ENCODE measurements at regions of chr6 and their contacts with region 1.

Region 1: DNA sequence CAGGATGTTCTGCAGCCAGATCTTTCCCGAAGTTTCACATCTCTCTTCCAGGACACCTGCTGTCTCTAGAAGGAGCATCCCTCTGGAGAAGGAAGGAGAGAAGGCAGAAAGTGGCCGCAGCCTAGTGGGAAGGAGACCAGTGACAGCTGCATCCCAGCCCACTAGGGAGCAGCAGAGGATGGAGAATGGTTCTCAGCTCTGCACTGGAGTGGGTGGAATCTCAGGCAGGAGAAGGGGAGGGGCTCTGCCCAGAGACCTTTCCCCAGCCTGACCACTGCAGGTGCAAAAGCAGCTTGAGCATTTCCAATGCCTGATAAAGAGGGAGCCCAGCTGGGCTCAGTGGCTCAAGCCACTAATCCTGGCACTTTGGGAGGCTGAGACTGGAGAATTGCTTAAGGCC is 32.3 kb downstream of the NCR2 start:
- DNase-seq: peak; percentile 78
- ATAC-seq: peak; percentile 94
- H3K4me3 ChIP-seq: no peak overlapping the region
- H3K27ac ChIP-seq: no peak overlapping the region
- H3K4me1 ChIP-seq: peaks cover 8% of the 10 kb centered on the region
- H3K27me3 ChIP-seq: peaks cover 0 to 15% of the 10 kb centered on the region in 2 experiments; a peak in 4 of 5 replicates
- CTCF ChIP-seq: peak; percentile 98
- EP300 ChIP-seq: no peak
- POLR2A ChIP-seq: no peak
- RAD21 ChIP-seq: peak; percentile 94

Region 2: GRCh38 chr6:41306187-41306854 is 61.4 kb before region 1 on chr6:
- CTCF ChIA-PET with region 1: interaction called, 15 read pairs
- POLR2A ChIA-PET with region 1: no interaction called
- in situ Hi-C with region 1: no loop called
- intact Hi-C with region 1: no loop called
- DNase-seq: peak; percentile 70
- ATAC-seq: peak; percentile 69
- H3K4me3 ChIP-seq: no peak overlapping the region
- H3K27ac ChIP-seq: no peak overlapping the region
- H3K4me1 ChIP-seq: peaks cover 6% of the 10 kb centered on the region
- H3K27me3 ChIP-seq: peaks cover 2 to 23% of the 10 kb centered on the region in 2 experiments; a peak in 3 of 5 replicates
- CTCF ChIP-seq: peak; percentile 69
- EP300 ChIP-seq: no peak
- POLR2A ChIP-seq: no peak
- RAD21 ChIP-seq: no peak

Region 3: DNA sequence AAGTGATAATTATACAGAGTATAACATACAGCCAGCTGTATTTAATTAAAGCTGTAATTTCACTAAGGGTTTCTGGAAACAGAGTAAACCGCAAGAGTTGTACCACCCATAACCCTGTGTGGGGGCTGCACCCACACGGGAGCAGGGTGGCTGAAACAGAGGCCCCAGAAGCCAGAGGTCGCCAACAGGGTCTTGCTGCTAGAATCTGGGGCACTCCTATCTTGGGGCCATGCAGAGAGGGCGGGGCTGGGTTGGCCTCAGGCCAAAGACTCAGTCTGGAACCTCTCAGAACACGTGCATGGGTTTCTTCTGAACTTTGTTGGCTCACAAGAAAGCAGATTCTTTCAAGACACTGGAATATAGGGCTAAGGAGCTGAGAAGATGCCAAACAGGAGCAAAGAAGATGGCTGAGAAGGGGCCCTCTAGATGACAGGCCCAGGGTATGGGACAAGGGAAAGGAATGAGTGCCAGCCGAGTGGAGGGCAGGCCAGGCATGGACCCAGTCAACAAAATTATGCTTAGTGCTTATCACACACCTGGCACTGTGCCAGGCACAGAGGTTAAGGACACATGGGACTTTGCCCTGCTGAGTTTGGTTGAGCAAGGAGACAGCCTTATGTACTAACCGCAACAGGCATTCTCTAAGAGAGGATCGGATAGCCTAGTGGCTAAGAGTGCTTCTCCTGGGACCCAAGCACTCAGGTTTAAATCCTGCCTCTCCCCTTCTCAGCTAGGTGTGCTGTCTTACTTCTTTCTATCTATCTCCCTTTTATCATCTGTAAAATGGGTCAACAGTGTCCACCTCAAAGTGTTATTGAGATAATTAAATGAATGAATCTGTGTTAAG is 81.9 kb after region 1 on chr6:
- CTCF ChIA-PET with region 1: interaction called, 5 read pairs
- POLR2A ChIA-PET with region 1: no interaction called
- in situ Hi-C with region 1: loop called (anchors 5 kb)
- intact Hi-C with region 1: no loop called
- DNase-seq: peak; percentile 86
- ATAC-seq: peak; percentile 58
- H3K4me3 ChIP-seq: 0 out of 6 replicates have a peak overlapping the region, but pooled peaks of 1 of the 3 experiments have one; percentile 3
- H3K27ac ChIP-seq: no peak overlapping the region
- H3K4me1 ChIP-seq: peaks cover 54% of the 10 kb centered on the region
- H3K27me3 ChIP-seq: peaks cover 12 to 58% of the 10 kb centered on the region in 2 experiments; a peak in 3 of 5 replicates
- CTCF ChIP-seq: no peak
- EP300 ChIP-seq: peak in 1 of 2 experiments; percentile 76; a peak in 2 of 4 replicates
- POLR2A ChIP-seq: no peak
- RAD21 ChIP-seq: no peak

Region 4: DNA sequence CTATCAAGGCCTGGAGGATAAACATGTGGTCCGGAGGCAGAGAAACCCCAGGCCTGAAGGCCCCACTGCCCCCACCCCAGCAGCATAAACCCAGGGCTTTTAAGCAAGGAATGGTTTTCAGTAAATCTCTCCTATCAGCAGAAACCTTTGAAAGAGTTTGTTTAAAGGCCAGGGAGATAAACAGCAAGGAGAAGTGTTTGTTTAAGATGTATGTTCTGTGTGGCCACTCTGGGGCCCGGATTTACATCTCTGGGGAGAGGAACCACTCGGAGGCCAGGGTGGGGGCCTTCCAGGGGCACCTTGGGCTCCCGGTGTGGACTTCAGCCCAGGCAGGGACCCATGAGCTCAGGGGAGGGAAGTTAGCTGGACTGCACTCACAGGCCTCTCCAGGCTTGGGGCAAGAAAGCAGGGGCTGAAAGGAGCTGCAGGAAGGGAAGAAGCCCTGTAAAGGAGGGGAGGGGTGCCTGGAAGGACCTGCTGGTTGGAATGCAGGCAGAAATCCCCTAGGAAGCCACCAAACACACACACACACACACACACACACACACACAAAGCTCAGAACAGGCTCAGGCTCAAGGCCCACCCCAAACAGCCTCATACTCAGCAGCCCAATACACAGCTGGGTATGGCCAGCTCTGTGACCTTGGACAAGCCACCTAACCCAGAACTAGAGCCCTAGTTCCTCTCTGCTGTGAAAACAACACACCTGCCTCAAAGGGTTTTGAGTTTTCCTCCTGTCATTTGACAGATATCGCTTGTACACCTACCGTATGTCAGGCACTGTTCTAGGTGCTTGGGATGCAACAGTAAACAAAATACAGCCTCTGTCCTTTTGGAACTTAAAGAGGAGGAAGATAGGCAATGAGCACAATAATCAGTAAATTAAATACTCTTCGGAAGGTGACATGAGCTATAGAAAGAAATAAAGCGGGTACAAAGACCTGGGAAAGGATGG is 152.3 kb after region 1 on chr6:
- CTCF ChIA-PET with region 1: no interaction called
- POLR2A ChIA-PET with region 1: no interaction called
- in situ Hi-C with region 1: no loop called
- intact Hi-C with region 1: no loop called
- DNase-seq: peak; percentile 97
- ATAC-seq: peak; percentile 93
- H3K4me3 ChIP-seq: peak overlapping the region in 2 of 3 experiments; percentile 8 to 50; a peak in 2 of 6 replicates
- H3K27ac ChIP-seq: peak overlapping the region; percentile 94
- H3K4me1 ChIP-seq: peaks cover 88% of the 10 kb centered on the region
- H3K27me3 ChIP-seq: no peaks in the 10 kb centered on the region
- CTCF ChIP-seq: peak; percentile 1; the same call in 1 of the 2 replicates
- EP300 ChIP-seq: peak in 1 of 2 experiments; percentile 98; a peak in 2 of 4 replicates
- POLR2A ChIP-seq: peak; percentile 74 to 77; a peak in 3 of 4 replicates
- RAD21 ChIP-seq: peak; percentile 45

Region 5: GRCh38 chr6:41545703-41546474 is 178.2 kb after region 1 on chr6 and contains the start of gene FOXP4:
- CTCF ChIA-PET with region 1: no interaction called
- POLR2A ChIA-PET with region 1: no interaction called
- in situ Hi-C with region 1: no loop called
- intact Hi-C with region 1: loop called (anchors 5 kb)
- DNase-seq: peak; percentile 91
- ATAC-seq: peak; percentile 75
- H3K4me3 ChIP-seq: peak within 1 kb of the TSS; percentile 67 to 99 (median 99)
- H3K27ac ChIP-seq: peak within 1 kb of the TSS; percentile 66
- H3K4me1 ChIP-seq: peaks cover 48% of the 10 kb centered on the region
- H3K27me3 ChIP-seq: no peaks in the 10 kb centered on the region
- CTCF ChIP-seq: 0 out of 2 replicates have a peak, but pooled peaks have one; percentile 8
- EP300 ChIP-seq: 0 out of 4 replicates have a peak, but pooled peaks of 1 of the 2 experiments have one; percentile 43
- POLR2A ChIP-seq: no peak
- RAD21 ChIP-seq: peak; percentile 47; the same call in 1 of the 2 replicates
- total RNA-seq, gene FOXP4: 11.0 TPM in 2 replicates

Region 6: GRCh38 chr6:41602864-41603608 is 235.3 kb after region 1 on chr6:
- CTCF ChIA-PET with region 1: interaction called, 37 read pairs
- POLR2A ChIA-PET with region 1: no interaction called
- in situ Hi-C with region 1: no loop called
- intact Hi-C with region 1: loop called (anchors 1 kb)
- DNase-seq: peak; percentile 86
- ATAC-seq: peak; percentile 68
- H3K4me3 ChIP-seq: no peak overlapping the region
- H3K27ac ChIP-seq: no peak overlapping the region
- H3K4me1 ChIP-seq: peaks cover 7% of the 10 kb centered on the region
- H3K27me3 ChIP-seq: peaks cover 3 to 12% of the 10 kb centered on the region in 2 experiments
- CTCF ChIP-seq: peak; percentile 97
- EP300 ChIP-seq: no peak
- POLR2A ChIP-seq: no peak
- RAD21 ChIP-seq: peak; percentile 92

Measured in HepG2 (cell line).